ENCODE measurements at regions of chr17 and their contacts with region 1.

Region 1: GRCh38 chr17:32483451-32484019 is 3.3 kb upstream of the CDK5R1 start:
- H3K4me3 Mint-ChIP-seq: no peak overlapping the region
- H3K27ac Mint-ChIP-seq: no peak overlapping the region
- H3K4me1 Mint-ChIP-seq: peaks cover 20% of the 10 kb centered on the region
- H3K27me3 Mint-ChIP-seq: peaks cover 18% of the 10 kb centered on the region

Region 2: GRCh38 chr17:32444308-32445073 is 39.0 kb before region 1 on chr17 and contains the start of gene PSMD11:
- intact Hi-C with region 1: no loop called
- H3K4me3 Mint-ChIP-seq: peak within 1 kb of the TSS; percentile 92
- H3K27ac Mint-ChIP-seq: peak within 1 kb of the TSS; percentile 90
- H3K4me1 Mint-ChIP-seq: peaks cover 30% of the 10 kb centered on the region
- H3K27me3 Mint-ChIP-seq: peaks cover 23% of the 10 kb centered on the region

Region 3: GRCh38 chr17:32609085-32609484 is 125.5 kb after region 1 on chr17:
- intact Hi-C with region 1: loop called (anchors 1 kb)
- H3K4me3 Mint-ChIP-seq: no peak overlapping the region
- H3K27ac Mint-ChIP-seq: no peak overlapping the region
- H3K4me1 Mint-ChIP-seq: peaks cover 8% of the 10 kb centered on the region
- H3K27me3 Mint-ChIP-seq: peaks cover 15% of the 10 kb centered on the region

Region 4: DNA sequence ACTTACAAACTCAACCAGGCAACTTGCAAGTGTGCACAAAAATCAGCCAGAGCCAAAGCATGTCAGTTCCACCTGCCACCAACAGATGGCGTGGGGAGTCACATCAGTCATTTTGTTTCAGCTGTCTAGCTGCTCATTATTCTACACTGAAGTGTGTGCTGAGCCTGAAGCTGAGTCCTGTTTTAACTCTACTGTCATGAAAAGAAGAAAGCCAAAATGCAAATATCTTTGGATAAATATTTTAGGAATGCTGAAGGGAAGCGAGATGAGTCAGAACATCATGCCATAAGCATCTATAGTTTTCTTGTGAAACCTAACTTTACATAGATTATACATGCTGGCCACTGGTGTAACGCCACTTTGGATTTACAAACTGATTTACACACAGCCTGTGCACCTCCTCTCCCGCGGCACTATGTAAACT is 175.9 kb after region 1 on chr17:
- intact Hi-C with region 1: loop called (anchors 5 kb)
- H3K4me3 Mint-ChIP-seq: no peak overlapping the region
- H3K27ac Mint-ChIP-seq: no peak overlapping the region
- H3K4me1 Mint-ChIP-seq: peaks cover 4% of the 10 kb centered on the region
- H3K27me3 Mint-ChIP-seq: no peaks in the 10 kb centered on the region

Region 5: DNA sequence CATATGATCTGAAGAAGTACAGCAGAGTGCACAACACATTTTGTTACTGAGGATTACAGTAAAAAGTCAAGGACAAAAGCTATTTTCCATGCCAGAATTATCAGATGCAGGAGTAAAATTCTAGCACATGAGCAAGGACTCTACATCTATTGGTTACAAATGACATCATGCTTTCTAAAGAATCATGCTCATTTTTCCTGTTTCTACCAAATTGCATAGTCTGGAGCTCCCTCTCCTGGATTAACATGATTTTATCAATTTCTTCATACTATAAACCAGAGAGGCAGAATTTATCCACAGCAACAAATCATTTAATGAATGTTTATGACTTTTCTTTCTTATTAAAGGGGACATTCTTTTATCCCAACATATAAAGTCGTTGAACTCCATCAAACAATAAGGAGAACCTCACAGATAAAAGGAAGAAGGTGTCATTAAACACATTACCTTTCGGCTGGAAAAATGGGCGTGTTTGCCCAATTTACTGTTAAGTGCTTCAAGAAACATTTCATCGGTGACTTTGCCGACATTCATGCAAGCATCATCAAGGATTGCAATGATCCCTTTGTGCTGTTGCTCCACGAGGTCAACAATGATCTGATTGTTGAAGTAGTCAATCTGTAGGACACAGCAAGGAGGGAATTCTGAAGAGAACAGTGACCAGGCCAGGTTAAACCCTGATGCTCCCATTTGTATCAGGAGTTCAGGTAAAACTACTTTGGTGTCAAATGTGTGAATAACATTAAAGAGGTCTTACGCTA is 271.7 kb after region 1 on chr17:
- intact Hi-C with region 1: loop called (anchors 5 kb)
- H3K4me3 Mint-ChIP-seq: no peak overlapping the region
- H3K27ac Mint-ChIP-seq: no peak overlapping the region
- H3K4me1 Mint-ChIP-seq: peaks cover 8% of the 10 kb centered on the region
- H3K27me3 Mint-ChIP-seq: peaks cover 4% of the 10 kb centered on the region